Activated B cell treated with CpG ODN at 0.5 μM for 24 hours (primary cell): ENCODE measurements at regions of chr17 and their contacts with region 1.

Region 1: DNA sequence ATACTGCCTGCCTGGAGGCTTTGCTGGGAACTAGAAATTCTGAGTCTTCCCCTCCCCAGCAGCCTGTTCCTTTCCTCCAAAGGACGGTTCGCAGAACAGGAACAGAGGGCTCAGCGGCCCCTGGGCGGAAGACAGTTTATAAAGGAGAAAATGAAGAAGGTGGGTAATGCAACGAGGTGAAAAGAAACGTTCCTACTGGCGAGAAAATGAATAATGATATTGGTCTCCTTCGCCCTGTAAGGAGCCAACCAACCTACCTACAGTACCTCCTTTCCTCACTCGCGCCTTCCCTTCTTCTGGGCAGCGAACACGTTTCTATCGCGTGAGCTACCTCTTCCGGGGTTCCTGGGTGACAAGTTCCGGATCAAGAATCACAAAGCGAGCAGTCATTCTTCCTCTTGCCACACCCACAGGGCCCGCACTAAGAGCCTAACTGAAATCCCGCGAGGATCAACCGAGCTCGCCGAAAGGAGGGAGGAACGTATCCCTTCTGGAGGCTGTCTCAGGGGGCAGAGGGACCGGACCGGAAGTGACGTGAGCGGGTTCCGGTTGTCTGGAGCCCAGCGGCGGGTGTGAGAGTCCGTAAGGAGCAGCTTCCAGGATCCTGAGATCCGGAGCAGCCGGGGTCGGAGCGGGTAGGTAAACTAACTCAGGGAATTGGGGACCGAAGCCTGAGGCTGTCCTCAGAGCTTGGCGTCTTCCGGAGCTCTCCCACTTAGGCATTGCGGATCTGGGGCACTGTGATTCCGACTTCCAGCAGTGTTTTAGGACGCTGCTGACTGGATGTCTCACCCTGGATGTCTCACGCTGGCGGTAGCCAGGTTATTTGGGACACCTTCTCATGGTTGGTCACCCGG is at the starts of genes PTRH2 and VMP1:
- DNase-seq: peak; percentile 79
- ATAC-seq: peak; percentile 95
- H3K4me3 Mint-ChIP-seq: peak within 1 kb of the TSS; percentile 99
- H3K27ac Mint-ChIP-seq: peak within 1 kb of the TSS; percentile 97
- H3K4me1 Mint-ChIP-seq: peaks cover 72% of the 10 kb centered on the region
- H3K27me3 Mint-ChIP-seq: no peaks in the 10 kb centered on the region
- CTCF ChIP-seq: no peak
- total RNA-seq, gene PTRH2: 27.0 and 29.9 TPM in 2 replicates
- total RNA-seq, gene VMP1: 158 and 176 TPM in 2 replicates

Region 2: DNA sequence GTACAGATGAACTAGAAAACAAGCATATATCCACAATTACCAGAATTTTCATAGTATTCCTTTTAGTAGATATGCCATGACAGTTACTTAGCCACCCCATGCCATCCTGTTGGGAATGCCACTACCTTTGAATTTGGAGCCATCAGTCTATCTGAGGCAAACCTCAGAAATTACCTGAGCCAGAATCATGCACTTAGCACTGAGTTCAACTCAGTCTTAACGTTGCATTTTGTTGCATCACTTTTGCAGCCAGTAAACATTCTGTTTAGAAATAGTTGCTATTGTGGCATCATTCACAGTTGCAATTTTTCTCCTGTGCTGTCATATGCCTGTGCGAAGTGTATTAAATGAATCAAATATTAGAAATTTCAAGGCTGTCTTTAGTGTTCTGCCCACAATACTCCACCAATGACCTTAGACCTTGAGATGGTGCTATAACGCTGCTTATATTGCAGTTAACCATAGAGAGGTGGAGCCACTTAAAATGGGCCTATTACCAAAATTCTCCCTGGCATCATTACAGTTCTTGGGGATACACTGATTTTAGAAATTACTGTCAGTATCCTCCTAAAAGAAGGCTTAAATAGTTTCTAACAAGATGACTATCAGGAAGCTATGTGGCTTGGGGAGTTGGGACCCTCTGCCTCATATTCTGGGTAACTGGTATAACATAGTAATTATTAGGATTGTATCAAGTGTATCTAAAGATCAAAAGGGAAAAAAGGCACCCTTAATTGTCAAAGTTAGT is 11.2 kb before region 1 on chr17:
- CTCF ChIA-PET with region 1: no interaction called
- POLR2A ChIA-PET with region 1: interaction called, 3 read pairs
- intact Hi-C with region 1: loop called (anchors 1 kb)
- DNase-seq: no peak
- ATAC-seq: no peak
- H3K4me3 Mint-ChIP-seq: no peak overlapping the region
- H3K27ac Mint-ChIP-seq: peak overlapping the region; percentile 16
- H3K4me1 Mint-ChIP-seq: peaks cover 23% of the 10 kb centered on the region
- H3K27me3 Mint-ChIP-seq: no peaks in the 10 kb centered on the region
- CTCF ChIP-seq: no peak